ENCODE measurements at regions of chr10 and their contacts with region 1.

Region 1: DNA sequence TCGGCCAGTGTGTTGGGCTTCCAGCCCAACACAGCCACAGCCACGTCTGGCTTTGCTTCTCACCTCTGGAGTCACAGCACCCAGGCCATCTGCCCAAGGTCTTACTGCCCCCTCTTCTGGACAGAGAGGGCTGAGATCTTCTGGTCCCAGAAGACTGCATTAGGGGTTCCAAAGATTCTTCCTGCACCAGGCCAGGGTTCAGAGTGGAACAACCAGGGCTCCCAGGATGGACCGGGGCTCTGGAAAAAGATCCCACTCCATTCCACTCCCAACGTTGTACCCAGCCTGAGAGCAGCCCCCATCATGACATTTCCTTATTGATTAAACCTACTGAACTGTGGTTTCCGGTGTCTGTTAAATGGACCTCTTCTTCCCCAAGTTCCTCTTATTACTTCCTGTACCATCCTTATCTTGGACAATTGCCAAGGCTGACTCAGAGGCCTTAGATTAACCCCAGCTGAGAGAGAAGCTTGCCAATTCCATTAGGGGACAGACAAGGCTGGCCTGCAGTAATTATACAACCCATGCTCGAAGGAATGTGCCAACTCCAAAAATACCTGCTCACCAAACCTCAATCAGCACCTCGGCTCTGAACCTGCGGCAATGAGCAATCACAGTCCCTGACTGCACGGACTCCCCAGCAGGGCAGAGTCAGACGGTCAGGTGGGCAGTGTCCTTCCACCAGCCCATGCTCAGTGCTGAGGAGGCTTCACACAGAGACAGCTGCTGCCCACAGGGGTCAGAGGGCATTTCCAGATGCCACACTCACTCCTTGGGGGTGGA is 47.9 kb upstream of the NPFFR1 start:
- DNase-seq: peak; percentile 73
- H3K4me3 ChIP-seq: no peak overlapping the region
- H3K27me3 ChIP-seq: no peaks in the 10 kb centered on the region
- CTCF ChIP-seq: peak; percentile 47

Region 2: GRCh38 chr10:69421611-69422314 is 909.9 kb before region 1 on chr10:
- CTCF ChIA-PET with region 1: no interaction called
- POLR2A ChIA-PET with region 1: no interaction called
- DNase-seq: no peak
- H3K4me3 ChIP-seq: no peak overlapping the region
- H3K27me3 ChIP-seq: peaks cover 13% of the 10 kb centered on the region
- CTCF ChIP-seq: no peak

Region 3: GRCh38 chr10:70233109-70233938 is 98.4 kb before region 1 on chr10 and contains the start of gene PPA1:
- CTCF ChIA-PET with region 1: no interaction called
- POLR2A ChIA-PET with region 1: interaction called, 22 read pairs
- DNase-seq: peak; percentile 69
- H3K4me3 ChIP-seq: peak within 1 kb of the TSS; percentile 83
- H3K27me3 ChIP-seq: no peaks in the 10 kb centered on the region
- CTCF ChIP-seq: no peak; the same call in 1 of the 2 replicates
- polyA plus RNA-seq, gene PPA1: 49.8 and 110 TPM in 2 replicates

Measured in BJ (cell line).